Endothelial cell of umbilical vein (primary cell): ENCODE measurements at regions of chrX and their contacts with region 1.

Region 1: GRCh38 chrX:151870603-151871002 is 42.1 kb upstream of the MAGEA4 start:
- DNase-seq: peak; percentile 90
- H3K4me3 ChIP-seq: no peak overlapping the region
- H3K27ac ChIP-seq: peak overlapping the region; percentile 96
- H3K4me1 ChIP-seq: peaks cover 21% of the 10 kb centered on the region
- H3K27me3 ChIP-seq: no peaks in the 10 kb centered on the region
- CTCF ChIP-seq: no peak
- POLR2A ChIP-seq: no peak

Region 2: GRCh38 chrX:151753313-151754041 is 117.1 kb before region 1 on chrX:
- CTCF ChIA-PET with region 1: no interaction called
- POLR2A ChIA-PET with region 1: no interaction called
- dilution Hi-C with region 1: no loop called
- intact Hi-C with region 1: no loop called
- DNase-seq: peak; percentile 49
- H3K4me3 ChIP-seq: no peak overlapping the region
- H3K27ac ChIP-seq: no peak overlapping the region
- H3K4me1 ChIP-seq: no peaks in the 10 kb centered on the region
- H3K27me3 ChIP-seq: no peaks in the 10 kb centered on the region
- CTCF ChIP-seq: peak; percentile 55 to 81
- POLR2A ChIP-seq: no peak

Region 3: GRCh38 chrX:151984328-151984727 is 113.7 kb after region 1 on chrX:
- CTCF ChIA-PET with region 1: no interaction called
- POLR2A ChIA-PET with region 1: no interaction called
- dilution Hi-C with region 1: no loop called
- intact Hi-C with region 1: loop called (anchors 1 kb)
- DNase-seq: peak; percentile 94
- H3K4me3 ChIP-seq: no peak overlapping the region
- H3K27ac ChIP-seq: peak overlapping the region; percentile 99
- H3K4me1 ChIP-seq: peaks cover 56% of the 10 kb centered on the region
- H3K27me3 ChIP-seq: no peaks in the 10 kb centered on the region
- CTCF ChIP-seq: no peak
- POLR2A ChIP-seq: no peak